Left ventricle myocardium inferior (tissue), 1 donor: ENCODE measurements at regions of chr12 and their contacts with region 1.

Region 1: GRCh38 chr12:12327802-12328201 is 22.2 kb downstream of the MANSC1 start:
- DNase-seq: no peak
- H3K4me3 ChIP-seq: no peak overlapping the region
- H3K27ac ChIP-seq: peak overlapping the region; percentile 39
- H3K4me1 ChIP-seq: peaks cover 12% of the 10 kb centered on the region
- H3K27me3 ChIP-seq: no peaks in the 10 kb centered on the region
- CTCF ChIP-seq: peak; percentile 77

Region 2: GRCh38 chr12:11576104-11576503 is 751.7 kb before region 1 on chr12:
- intact Hi-C with region 1: loop called (anchors 10 kb)
- DNase-seq: no peak
- H3K4me3 ChIP-seq: no peak overlapping the region
- H3K27ac ChIP-seq: no peak overlapping the region
- H3K4me1 ChIP-seq: no peaks in the 10 kb centered on the region
- H3K27me3 ChIP-seq: peaks cover 14% of the 10 kb centered on the region
- CTCF ChIP-seq: no peak

Region 3: DNA sequence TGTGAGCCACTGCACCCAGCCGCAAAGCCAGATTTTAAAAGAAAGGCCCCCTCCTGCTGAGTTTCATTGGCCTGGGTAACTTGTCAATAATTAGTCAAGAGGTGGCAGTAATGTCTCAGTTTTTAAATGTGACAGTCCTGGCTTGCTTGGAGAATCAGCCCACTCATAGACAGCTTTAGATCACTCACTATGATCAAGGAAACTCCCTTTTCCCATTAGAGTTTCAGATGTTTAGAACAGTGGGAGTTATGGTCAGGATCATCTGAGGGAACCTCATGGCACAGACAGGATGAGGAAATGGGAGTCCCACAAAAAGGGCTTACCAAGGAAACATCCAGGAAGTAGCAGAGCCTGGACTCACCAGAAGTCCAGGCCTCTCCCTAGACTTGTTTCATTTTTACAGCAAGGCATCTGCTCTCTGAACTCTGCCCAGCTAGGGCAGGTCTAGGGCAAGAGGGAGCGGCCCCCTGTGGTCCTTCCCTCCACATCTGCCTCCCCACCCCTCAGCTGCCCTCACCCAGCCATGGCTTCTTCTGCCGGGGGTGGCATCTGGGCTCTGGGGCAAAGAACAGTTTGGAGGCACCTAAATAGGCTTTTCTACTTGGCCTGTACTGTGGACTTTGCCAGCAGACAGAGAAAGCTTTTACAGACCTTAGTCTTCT is 245.8 kb before region 1 on chr12:
- intact Hi-C with region 1: loop called (anchors 5 kb)
- DNase-seq: no peak
- H3K4me3 ChIP-seq: no peak overlapping the region
- H3K27ac ChIP-seq: peak overlapping the region; percentile 56
- H3K4me1 ChIP-seq: peaks cover 7% of the 10 kb centered on the region
- H3K27me3 ChIP-seq: no peaks in the 10 kb centered on the region
- CTCF ChIP-seq: peak; percentile 59

Region 4: DNA sequence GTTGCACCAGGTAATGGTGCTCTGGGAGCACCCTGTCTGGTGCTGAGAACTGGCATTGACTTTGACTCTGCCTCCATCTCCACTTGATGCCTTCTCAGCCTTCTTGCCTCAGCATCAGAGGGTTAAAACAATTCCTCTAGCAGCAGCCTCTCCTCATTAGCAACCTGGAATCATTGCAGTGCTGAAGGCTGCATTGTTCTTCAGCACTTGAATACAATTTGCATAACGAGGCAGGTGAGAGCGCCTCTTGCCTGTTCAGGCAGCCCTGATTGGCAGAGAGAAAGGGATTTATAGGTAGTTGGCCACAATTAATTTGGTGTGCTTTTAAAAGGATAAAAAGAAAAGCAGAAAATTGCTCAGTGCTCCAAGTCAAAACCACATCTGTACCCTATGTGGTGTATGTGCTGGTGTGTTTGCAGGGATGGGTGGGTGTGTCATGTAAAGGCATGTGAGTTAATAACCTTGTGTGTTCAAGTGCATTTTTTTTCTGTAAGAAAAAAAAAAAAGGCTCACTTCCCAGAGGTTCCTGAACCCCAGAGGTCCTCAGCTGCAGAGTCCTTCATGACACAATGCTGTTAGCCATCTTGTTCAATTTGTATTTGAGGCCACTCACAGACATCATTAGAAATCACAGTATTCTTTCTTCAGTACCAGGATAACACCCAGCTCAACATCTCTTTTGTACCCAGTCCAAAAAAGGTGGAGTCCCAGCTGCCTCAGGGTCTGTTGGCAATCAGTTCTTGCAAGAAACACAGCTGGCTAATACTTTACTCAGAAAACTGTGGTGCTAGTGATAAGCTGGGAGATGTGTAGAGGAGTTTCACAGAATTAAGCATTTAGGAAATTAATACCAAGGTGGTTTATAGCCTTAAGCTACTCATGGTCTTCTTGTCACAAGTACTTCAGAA is 1268.0 kb after region 1 on chr12:
- intact Hi-C with region 1: no loop called
- DNase-seq: no peak
- H3K4me3 ChIP-seq: no peak overlapping the region
- H3K27ac ChIP-seq: no peak overlapping the region
- H3K4me1 ChIP-seq: no peaks in the 10 kb centered on the region
- H3K27me3 ChIP-seq: no peaks in the 10 kb centered on the region
- CTCF ChIP-seq: no peak